Aorta (tissue), 5 donors: ENCODE measurements at regions of chr13 and their contacts with region 1.

Region 1: DNA sequence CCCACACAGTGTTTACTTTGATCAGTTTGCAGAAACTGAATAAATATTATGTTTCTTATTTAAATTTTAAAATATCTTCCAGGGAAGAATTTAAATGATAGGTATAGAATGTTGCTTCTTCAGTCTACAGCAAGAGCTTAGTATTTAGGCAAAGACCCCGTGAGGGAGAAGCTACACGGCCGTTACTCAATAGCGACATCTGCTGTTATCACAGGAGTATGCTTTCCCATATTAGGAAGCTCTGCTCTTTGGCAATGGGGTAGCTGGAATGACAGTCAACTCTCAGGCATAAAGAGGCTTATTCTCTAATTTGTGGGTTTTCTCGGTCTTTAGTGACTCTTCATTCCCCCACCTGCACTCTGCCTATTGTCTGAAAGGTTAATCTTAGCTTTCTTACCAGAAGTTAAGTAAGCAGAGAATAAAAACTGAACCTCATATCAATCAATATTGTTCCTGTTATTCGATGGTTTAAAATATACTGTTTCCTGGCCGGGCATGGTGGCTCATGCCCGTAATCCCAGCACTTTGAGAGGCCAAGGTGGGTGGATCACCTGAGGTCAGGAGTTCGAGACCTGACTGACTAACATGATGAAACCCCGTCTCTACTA is 13.2 kb upstream of the LHFPL6 start:
- DNase-seq: no peak
- ATAC-seq: peak; percentile 86
- H3K4me3 ChIP-seq: no peak overlapping the region
- H3K27ac ChIP-seq: no peak overlapping the region
- H3K4me1 ChIP-seq: no peaks in the 10 kb centered on the region
- H3K27me3 ChIP-seq: no peaks in the 10 kb centered on the region

Region 2: GRCh38 chr13:39051157-39051556 is 565.0 kb before region 1 on chr13:
- intact Hi-C with region 1: loop called (anchors 5 kb)
- DNase-seq: no peak
- ATAC-seq: peak; percentile 48
- H3K4me3 ChIP-seq: no peak overlapping the region
- H3K27ac ChIP-seq: no peak overlapping the region
- H3K4me1 ChIP-seq: no peaks in the 10 kb centered on the region
- H3K27me3 ChIP-seq: no peaks in the 10 kb centered on the region

Region 3: GRCh38 chr13:39144941-39145533 is 471.2 kb before region 1 on chr13:
- intact Hi-C with region 1: loop called (anchors 2 kb)
- DNase-seq: peak; percentile 51 to 75
- ATAC-seq: peak; percentile 88
- H3K4me3 ChIP-seq: peak overlapping the region in 1 of 2 donors; percentile 31
- H3K27ac ChIP-seq: no peak overlapping the region
- H3K4me1 ChIP-seq: no peaks in the 10 kb centered on the region
- H3K27me3 ChIP-seq: no peaks in the 10 kb centered on the region

Region 4: GRCh38 chr13:39263033-39263432 is 353.2 kb before region 1 on chr13:
- intact Hi-C with region 1: loop called in 1 of 2 experiments (anchors 10 kb)
- DNase-seq: no peak
- ATAC-seq: peak; percentile 75
- H3K4me3 ChIP-seq: no peak overlapping the region
- H3K27ac ChIP-seq: no peak overlapping the region
- H3K4me1 ChIP-seq: no peaks in the 10 kb centered on the region
- H3K27me3 ChIP-seq: no peaks in the 10 kb centered on the region